Gastrocnemius medialis (tissue), 4 donors: ENCODE measurements at regions of chr9 and their contacts with region 1.

Region 1: GRCh38 chr9:109831998-109832658 is 52.1 kb downstream of the PALM2AKAP2 start:
- DNase-seq: no peak
- ATAC-seq: no peak
- H3K4me3 ChIP-seq: no peak overlapping the region
- H3K27ac ChIP-seq: no peak overlapping the region
- H3K4me1 ChIP-seq: no peaks in the 10 kb centered on the region
- H3K27me3 ChIP-seq: peaks cover 0 to 4% (median 0%) of the 10 kb centered on the region in 3 donors
- CTCF ChIP-seq: no peak
- POLR2A ChIP-seq: no peak

Region 2: DNA sequence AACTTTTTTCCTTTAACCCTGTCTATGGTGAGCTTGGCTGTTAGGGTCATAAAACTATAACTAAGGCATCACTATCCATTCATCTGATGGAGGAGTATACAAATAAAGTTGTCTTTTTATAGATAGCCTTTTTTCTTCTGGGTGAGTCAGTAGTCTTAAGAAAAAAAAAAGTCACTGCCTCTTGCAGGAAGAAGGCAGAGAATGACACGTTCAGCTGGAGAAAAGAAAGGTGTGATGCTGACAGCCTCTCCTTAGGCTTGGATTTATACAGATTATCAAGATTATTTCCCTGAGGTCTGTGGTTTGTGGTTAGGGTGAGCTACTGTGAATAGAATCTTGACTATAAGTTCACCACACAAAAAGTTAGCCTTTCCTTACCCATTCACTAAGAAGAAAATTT is 534.2 kb before region 1 on chr9:
- in situ Hi-C with region 1: no loop called
- intact Hi-C with region 1: no loop called
- DNase-seq: no peak
- ATAC-seq: no peak
- H3K4me3 ChIP-seq: no peak overlapping the region
- H3K27ac ChIP-seq: no peak overlapping the region
- H3K4me1 ChIP-seq: no peaks in the 10 kb centered on the region
- H3K27me3 ChIP-seq: no peaks in the 10 kb centered on the region
- CTCF ChIP-seq: no peak
- POLR2A ChIP-seq: no peak

Region 3: DNA sequence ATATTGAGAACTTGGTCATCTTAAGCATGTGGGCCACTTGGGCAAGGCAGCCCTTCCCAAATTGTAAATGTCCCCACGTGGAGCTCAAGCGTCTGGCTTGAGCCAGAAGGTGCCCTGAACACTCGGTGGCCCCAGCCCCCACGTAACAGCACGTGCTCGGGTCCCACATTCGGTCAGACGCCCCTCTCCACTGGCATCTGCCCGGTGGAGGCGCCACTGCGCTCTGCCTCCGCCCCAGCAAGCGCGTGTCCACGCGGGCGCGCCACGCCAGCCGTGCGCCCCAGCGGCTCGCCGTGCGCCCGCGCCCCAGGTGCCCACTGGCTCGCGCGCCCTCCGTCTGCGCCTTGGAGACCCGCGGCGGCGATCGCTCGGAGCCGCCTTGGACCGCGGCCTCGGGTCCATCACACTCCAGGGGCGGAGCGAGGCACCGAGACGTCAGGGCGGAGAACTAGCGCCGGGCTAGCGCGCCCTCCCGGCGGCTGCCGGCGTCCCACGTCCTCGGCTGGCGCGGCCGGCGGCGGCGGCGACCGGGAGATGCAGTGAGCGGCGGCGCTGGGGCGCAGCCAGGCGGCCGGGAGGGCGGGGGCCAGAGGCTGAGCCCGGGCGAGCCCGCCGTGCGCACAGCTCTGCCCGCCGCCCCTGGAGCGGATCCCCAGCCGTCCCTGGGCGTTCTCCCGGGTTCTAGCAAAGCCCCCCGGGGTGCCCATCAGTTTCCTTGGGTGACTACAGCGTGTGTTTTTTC is 52.2 kb before region 1 on chr9 and contains the start of gene PALM2AKAP2:
- in situ Hi-C with region 1: loop called in 1 of 4 experiments (anchors 10 kb)
- intact Hi-C with region 1: no loop called
- DNase-seq: peak in 1 of 2 donors; percentile 36
- ATAC-seq: peak; percentile 43 to 66
- H3K4me3 ChIP-seq: peak within 1 kb of the TSS; percentile 58 to 64 (median 58)
- H3K27ac ChIP-seq: peak within 1 kb of the TSS; percentile 23 to 66 (median 48)
- H3K4me1 ChIP-seq: peaks cover 6 to 8% of the 10 kb centered on the region in 2 donors
- H3K27me3 ChIP-seq: peaks cover 0 to 4% (median 2%) of the 10 kb centered on the region in 3 donors
- CTCF ChIP-seq: peak in 1 of 5 experiments; percentile 40
- POLR2A ChIP-seq: peak in 1 of 2 donors; percentile 19
- total RNA-seq, gene PALM2AKAP2: 0.15 to 1.4 (median 1.0) TPM